GM10248 (cell line): ENCODE measurements at regions of chr1 and their contacts with region 1.

Region 1: DNA sequence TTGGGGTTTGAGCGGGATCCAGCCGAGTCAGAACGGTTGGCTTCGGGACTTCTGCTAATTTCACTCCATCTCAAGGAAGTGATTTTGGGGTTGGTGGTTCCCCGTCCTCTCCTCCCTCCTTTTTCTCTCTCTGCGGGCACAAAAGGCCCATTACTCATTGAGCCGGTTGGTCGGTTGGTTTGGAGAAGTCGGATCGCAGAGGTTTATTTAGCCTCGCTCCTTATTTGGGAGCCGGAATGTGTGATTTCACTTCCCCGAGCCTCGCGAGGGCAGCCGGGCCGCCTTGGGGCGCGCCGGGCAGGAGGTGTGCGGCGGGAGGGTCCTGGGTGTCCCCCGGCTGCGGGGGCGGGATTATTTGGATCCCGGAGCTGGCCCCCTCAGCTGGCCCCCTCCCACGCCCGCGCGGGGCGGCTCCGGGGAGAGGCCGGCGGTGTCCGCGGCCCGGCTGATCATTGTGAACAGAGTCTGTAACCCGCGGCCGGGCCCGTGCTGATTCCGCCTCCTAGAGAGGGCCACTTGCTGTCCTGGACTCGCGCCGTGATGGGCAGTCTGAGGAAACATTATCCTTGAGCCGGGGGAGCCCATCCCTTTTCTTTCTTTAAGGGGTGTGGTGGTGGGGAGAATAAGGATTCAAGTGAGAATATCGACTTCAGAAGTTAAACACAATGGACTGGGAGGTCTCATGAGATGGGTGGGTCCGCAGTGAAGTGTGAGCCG is 1.2 kb downstream of the MAPKAPK2 start:
- DNase-seq: peak; percentile 63
- CTCF ChIP-seq: no peak

Region 2: DNA sequence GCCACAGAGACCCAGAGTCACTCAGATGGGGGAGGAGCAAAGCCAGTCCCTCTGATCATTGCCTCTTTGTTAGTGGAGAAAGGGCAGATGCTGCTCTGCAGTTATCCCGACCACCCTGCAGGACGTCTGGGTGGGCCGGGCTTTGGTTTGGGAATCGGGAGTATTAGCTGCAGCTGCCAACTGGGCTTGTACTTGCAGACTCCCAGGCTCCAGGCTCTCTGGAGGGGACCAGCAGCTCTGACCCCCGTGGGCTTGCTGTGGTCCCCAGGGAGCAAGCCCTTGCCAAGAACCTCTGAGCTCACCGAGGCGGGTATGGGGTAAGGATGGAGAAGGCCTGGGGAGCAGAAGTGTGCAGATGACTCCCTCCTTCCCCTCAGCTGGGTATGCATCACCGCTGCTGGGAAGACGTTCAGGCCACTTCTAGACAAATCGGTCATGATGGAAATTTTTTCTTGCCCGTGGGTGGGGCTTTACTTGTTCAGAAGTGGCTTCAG is 20.4 kb after region 1 on chr1:
- CTCF ChIA-PET with region 1: interaction called, 88 read pairs
- POLR2A ChIA-PET with region 1: interaction called, 3 read pairs
- DNase-seq: no peak
- CTCF ChIP-seq: no peak